A673 (cell line): ENCODE measurements at regions of chr16 and their contacts with region 1.

Region 1: GRCh38 chr16:13793841-13794409 is 126.0 kb upstream of the ERCC4 start:
- DNase-seq: no peak
- H3K4me3 ChIP-seq: no peak overlapping the region
- H3K27ac ChIP-seq: no peak overlapping the region
- H3K4me1 ChIP-seq: no peaks in the 10 kb centered on the region
- H3K27me3 ChIP-seq: no peaks in the 10 kb centered on the region
- CTCF ChIP-seq: no peak

Region 2: DNA sequence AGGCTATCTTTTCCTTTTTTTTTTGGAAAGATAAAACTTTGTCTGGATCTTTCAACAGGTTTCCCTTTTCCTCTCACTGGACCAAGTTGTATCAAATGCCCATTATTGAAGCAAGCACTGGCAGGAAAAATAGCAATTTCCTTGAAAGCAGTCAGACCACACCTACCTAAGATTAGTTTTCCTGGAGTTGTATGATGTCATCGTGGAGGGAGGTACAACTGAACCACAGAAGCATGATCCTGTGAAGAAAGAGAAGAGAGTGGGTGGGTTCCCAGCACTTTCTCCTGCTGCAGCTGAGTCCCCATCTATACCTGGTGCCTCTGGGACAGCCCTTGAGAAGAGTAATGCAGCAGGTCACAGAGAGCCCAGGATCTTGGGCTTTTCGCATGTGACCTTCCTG is 62.5 kb after region 1 on chr16:
- CTCF ChIA-PET with region 1: no interaction called
- POLR2A ChIA-PET with region 1: no interaction called
- intact Hi-C with region 1: loop called (anchors 10 kb)
- DNase-seq: no peak
- H3K4me3 ChIP-seq: no peak overlapping the region
- H3K27ac ChIP-seq: no peak overlapping the region
- H3K4me1 ChIP-seq: no peaks in the 10 kb centered on the region
- H3K27me3 ChIP-seq: no peaks in the 10 kb centered on the region
- CTCF ChIP-seq: no peak